ENCODE measurements at regions of chr2 and their contacts with region 1.

Region 1: GRCh38 chr2:74198461-74199274 is at the start of gene MTHFD2:
- DNase-seq: peak; percentile 93

Region 2: GRCh38 chr2:74147727-74148456 is 50.8 kb before region 1 on chr2 and contains the start of gene BOLA3:
- CTCF ChIA-PET with region 1: interaction called, 3 read pairs
- POLR2A ChIA-PET with region 1: interaction called, 21 read pairs
- DNase-seq: peak; percentile 93

Region 3: GRCh38 chr2:74515981-74516633 is 317.4 kb after region 1 on chr2:
- CTCF ChIA-PET with region 1: no interaction called
- POLR2A ChIA-PET with region 1: no interaction called
- DNase-seq: no peak

Measured in HEK293T (cell line).